Activated B cell treated with CpG ODN at 0.5 μM for 24 hours (primary cell): ENCODE measurements at regions of chr2 and their contacts with region 1.

Region 1: DNA sequence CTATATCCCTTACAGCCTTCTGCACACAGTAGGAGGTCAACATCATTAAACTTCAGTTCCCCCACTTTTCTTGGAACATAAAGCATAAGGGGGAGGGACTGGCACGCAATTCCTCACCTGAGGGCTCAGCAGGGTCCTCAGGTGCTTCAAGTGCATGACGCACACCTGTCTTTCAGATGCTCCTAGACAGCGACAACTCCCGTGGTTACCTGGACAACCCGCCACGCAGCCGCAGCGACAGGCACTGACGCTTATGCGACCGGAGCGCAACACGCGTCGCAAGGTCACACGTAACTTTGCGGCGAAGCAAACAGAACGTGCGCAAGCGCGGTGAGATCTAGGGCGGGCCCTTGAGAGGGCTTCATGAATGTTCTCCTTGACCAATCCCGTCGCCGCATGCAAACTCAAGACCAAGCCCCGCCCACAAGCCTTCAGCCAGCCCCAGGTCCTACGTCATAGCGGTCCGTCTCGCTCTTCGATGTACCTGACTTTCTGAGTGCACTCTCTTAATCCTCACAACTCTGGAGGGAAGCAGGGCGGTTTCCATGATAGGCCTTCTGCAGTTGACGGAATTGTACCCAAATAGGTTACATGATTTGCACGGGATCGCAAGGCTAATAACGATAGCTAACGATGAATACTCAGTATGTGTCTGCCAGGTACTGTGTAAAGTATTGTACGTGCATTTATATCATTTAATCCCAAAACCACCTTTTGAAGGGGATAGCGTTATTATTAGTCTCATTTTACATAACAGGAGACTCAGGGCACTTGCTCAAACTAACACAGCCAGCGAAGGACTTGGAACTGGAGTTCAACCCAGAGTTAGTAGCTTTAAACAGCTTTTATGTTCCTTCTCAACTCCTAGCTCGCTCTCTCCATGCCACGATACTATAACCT is at the start of gene IFT172:
- DNase-seq: peak; percentile 92
- ATAC-seq: peak; percentile 96
- H3K4me3 Mint-ChIP-seq: peak within 1 kb of the TSS; percentile 86
- H3K27ac Mint-ChIP-seq: peak within 1 kb of the TSS; percentile 79
- H3K4me1 Mint-ChIP-seq: peaks cover 26% of the 10 kb centered on the region
- H3K27me3 Mint-ChIP-seq: peaks cover 19% of the 10 kb centered on the region
- CTCF ChIP-seq: no peak
- total RNA-seq, gene IFT172: 12.7 and 14.4 TPM in 2 replicates

Region 2: GRCh38 chr2:27032495-27033252 is 457.1 kb before region 1 on chr2 and contains the start of gene TMEM214:
- CTCF ChIA-PET with region 1: no interaction called
- POLR2A ChIA-PET with region 1: no interaction called
- intact Hi-C with region 1: loop called (anchors 5 kb)
- DNase-seq: peak; percentile 76
- ATAC-seq: peak; percentile 95
- H3K4me3 Mint-ChIP-seq: peak within 1 kb of the TSS; percentile 93
- H3K27ac Mint-ChIP-seq: peak within 1 kb of the TSS; percentile 80
- H3K4me1 Mint-ChIP-seq: peaks cover 32% of the 10 kb centered on the region
- H3K27me3 Mint-ChIP-seq: no peaks in the 10 kb centered on the region
- CTCF ChIP-seq: no peak
- total RNA-seq, gene TMEM214: 84.4 and 92.1 TPM in 2 replicates

Region 3: DNA sequence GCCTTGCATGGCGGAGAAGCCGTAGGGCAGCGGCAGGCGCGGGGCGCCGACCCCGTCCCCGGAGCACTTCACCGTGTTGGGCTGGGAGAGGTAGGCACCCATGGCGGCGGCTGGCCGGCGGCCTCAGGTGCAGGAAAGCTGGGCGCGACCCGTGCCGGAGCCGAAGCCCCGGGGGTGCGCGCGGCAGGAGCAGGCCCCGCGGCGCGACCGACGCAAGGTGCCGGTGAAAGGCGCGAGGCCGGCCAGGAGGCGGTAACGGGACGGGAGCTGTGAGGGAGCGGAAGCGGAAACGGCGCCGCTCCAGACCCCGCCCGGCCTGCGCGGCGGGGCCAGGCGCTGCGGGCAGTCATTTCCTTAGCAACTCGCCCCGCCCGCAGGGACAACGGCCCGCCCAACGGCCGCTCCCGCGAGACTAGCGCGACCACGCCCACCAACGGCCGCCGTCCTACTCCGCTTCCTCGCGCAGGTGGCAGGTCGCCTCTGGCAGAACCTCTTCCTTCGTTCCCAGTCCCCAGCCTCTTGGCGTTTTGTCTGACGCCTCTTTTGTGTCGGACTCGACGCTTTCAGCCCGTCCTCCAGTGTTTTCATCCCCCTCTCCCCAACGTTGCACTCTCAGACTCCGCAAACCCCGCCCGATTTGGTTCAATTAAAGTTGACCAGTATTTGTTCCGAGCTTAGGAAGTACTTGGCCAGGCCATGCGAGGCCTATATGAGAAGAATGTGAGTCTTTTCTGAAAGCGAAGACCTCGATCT is 80.3 kb before region 1 on chr2 and contains the start of gene PPM1G:
- CTCF ChIA-PET with region 1: no interaction called
- POLR2A ChIA-PET with region 1: no interaction called
- intact Hi-C with region 1: loop called (anchors 1 kb)
- DNase-seq: peak; percentile 98
- ATAC-seq: peak; percentile 96
- H3K4me3 Mint-ChIP-seq: peak within 1 kb of the TSS; percentile 87
- H3K27ac Mint-ChIP-seq: peak within 1 kb of the TSS; percentile 95
- H3K4me1 Mint-ChIP-seq: peaks cover 31% of the 10 kb centered on the region
- H3K27me3 Mint-ChIP-seq: no peaks in the 10 kb centered on the region
- CTCF ChIP-seq: no peak
- total RNA-seq, gene PPM1G: 74.7 and 75.2 TPM in 2 replicates

Region 4: GRCh38 chr2:27441958-27442919 is 47.5 kb before region 1 on chr2 and contains the start of gene KRTCAP3:
- CTCF ChIA-PET with region 1: no interaction called
- POLR2A ChIA-PET with region 1: no interaction called
- intact Hi-C with region 1: loop called (anchors 5 kb)
- DNase-seq: peak; percentile 68
- ATAC-seq: peak; percentile 98
- H3K4me3 Mint-ChIP-seq: peak within 1 kb of the TSS; percentile 52
- H3K27ac Mint-ChIP-seq: peak within 1 kb of the TSS; percentile 30
- H3K4me1 Mint-ChIP-seq: peaks cover 13% of the 10 kb centered on the region
- H3K27me3 Mint-ChIP-seq: no peaks in the 10 kb centered on the region
- CTCF ChIP-seq: no peak
- total RNA-seq, gene KRTCAP3: 6.3 and 10.0 TPM in 2 replicates

Region 5: GRCh38 chr2:27522400-27522945 is 32.7 kb after region 1 on chr2:
- CTCF ChIA-PET with region 1: no interaction called
- POLR2A ChIA-PET with region 1: no interaction called
- intact Hi-C with region 1: no loop called
- DNase-seq: no peak
- ATAC-seq: no peak
- H3K4me3 Mint-ChIP-seq: no peak overlapping the region
- H3K27ac Mint-ChIP-seq: no peak overlapping the region
- H3K4me1 Mint-ChIP-seq: no peaks in the 10 kb centered on the region
- H3K27me3 Mint-ChIP-seq: peaks cover 26% of the 10 kb centered on the region
- CTCF ChIP-seq: no peak

Region 6: GRCh38 chr2:27628767-27629709 is 139.3 kb after region 1 on chr2 and contains the starts of genes CCDC121 and GPN1:
- CTCF ChIA-PET with region 1: no interaction called
- POLR2A ChIA-PET with region 1: no interaction called
- intact Hi-C with region 1: loop called (anchors 1 kb)
- DNase-seq: peak; percentile 85
- ATAC-seq: peak; percentile 99
- H3K4me3 Mint-ChIP-seq: no peak within 1 kb of the TSS
- H3K27ac Mint-ChIP-seq: peak within 1 kb of the TSS; percentile 69
- H3K4me1 Mint-ChIP-seq: peaks cover 12% of the 10 kb centered on the region
- H3K27me3 Mint-ChIP-seq: no peaks in the 10 kb centered on the region
- CTCF ChIP-seq: no peak
- total RNA-seq, gene CCDC121: 0.69 and 0.71 TPM in 2 replicates
- total RNA-seq, gene GPN1: 36.9 and 39.3 TPM in 2 replicates

Region 7: DNA sequence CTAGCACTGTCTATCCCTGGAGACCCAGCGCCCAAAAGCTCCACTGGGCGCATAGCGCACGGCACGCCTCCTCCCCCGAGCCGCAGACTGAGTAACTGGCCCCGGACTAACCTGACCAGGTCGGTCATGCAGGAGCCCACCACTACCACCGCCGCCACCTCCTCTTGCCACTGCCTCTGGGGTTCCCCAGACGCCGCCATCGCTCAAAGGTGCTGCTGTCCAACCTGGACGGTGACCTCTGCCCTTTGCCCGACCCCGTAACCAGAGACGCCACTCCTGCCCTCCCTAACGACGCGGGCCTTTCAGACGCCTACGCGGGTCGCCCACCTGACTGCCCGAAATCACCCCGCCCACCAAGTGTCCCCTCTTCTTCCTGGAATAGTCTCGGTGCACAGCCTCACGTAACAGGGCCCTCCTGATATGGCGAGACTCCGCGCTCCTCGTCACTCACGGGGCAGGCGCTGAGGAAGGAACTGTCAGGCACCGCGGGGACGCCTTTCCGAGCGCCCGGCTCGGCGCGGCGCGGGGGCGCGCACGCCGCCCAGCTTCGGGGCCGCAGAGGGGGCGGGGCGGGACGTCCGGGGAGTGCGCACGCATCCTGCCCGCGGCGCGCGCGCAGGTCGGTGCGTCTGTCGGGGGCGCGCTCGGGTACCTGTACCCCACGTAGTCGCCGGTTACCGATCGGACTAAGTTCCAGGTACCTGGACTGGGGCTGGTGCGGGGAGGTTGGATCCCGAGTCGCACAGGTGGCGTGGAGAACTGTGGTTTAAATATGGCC is 400.6 kb after region 1 on chr2 and contains the starts of genes BABAM2 and RBKS:
- CTCF ChIA-PET with region 1: no interaction called
- POLR2A ChIA-PET with region 1: no interaction called
- intact Hi-C with region 1: loop called (anchors 2 kb)
- DNase-seq: peak; percentile 93
- ATAC-seq: peak; percentile 78
- H3K4me3 Mint-ChIP-seq: peak within 1 kb of the TSS; percentile 99
- H3K27ac Mint-ChIP-seq: peak within 1 kb of the TSS; percentile 99
- H3K4me1 Mint-ChIP-seq: peaks cover 74% of the 10 kb centered on the region
- H3K27me3 Mint-ChIP-seq: peaks cover 2% of the 10 kb centered on the region
- CTCF ChIP-seq: no peak
- total RNA-seq, gene BABAM2: 51.9 and 55.6 TPM in 2 replicates
- total RNA-seq, gene RBKS: 2.5 and 3.1 TPM in 2 replicates